ENCODE measurements at regions of chr2 and their contacts with region 1.

Region 1: GRCh38 chr2:49959961-49960553 is 805.7 kb upstream of the FSHR start:
- DNase-seq: no peak
- H3K4me3 ChIP-seq: no peak overlapping the region
- H3K27ac ChIP-seq: no peak overlapping the region
- H3K4me1 ChIP-seq: peaks cover 0 to 6% (median 4%) of the 10 kb centered on the region in 4 experiments; a peak in 2 of 7 replicates
- H3K27me3 ChIP-seq: no peaks in the 10 kb centered on the region
- CTCF ChIP-seq: no peak
- EP300 ChIP-seq: no peak
- POLR2A ChIP-seq: no peak
- RAD21 ChIP-seq: no peak

Region 2: GRCh38 chr2:49924044-49924817 is 35.8 kb before region 1 on chr2:
- CTCF ChIA-PET with region 1: no interaction called
- POLR2A ChIA-PET with region 1: no interaction called
- DNase-seq: no peak
- H3K4me3 ChIP-seq: peak overlapping the region in 1 of 4 experiments; percentile 13; a peak in 1 of 8 replicates
- H3K27ac ChIP-seq: no peak overlapping the region
- H3K4me1 ChIP-seq: peaks cover 0 to 15% (median 2%) of the 10 kb centered on the region in 4 experiments; a peak in 3 of 7 replicates
- H3K27me3 ChIP-seq: no peaks in the 10 kb centered on the region; a peak in 1 of 7 replicates
- CTCF ChIP-seq: no peak
- EP300 ChIP-seq: no peak
- POLR2A ChIP-seq: no peak
- RAD21 ChIP-seq: no peak

Region 3: GRCh38 chr2:49948091-49948490 is 12.0 kb before region 1 on chr2:
- CTCF ChIA-PET with region 1: interaction called, 12 read pairs
- POLR2A ChIA-PET with region 1: no interaction called
- DNase-seq: no peak
- H3K4me3 ChIP-seq: no peak overlapping the region
- H3K27ac ChIP-seq: no peak overlapping the region
- H3K4me1 ChIP-seq: no peaks in the 10 kb centered on the region
- H3K27me3 ChIP-seq: peaks cover 0 to 1% (median 0%) of the 10 kb centered on the region in 4 experiments; a peak in 1 of 7 replicates
- CTCF ChIP-seq: no peak
- EP300 ChIP-seq: no peak
- POLR2A ChIP-seq: no peak
- RAD21 ChIP-seq: no peak

Region 4: DNA sequence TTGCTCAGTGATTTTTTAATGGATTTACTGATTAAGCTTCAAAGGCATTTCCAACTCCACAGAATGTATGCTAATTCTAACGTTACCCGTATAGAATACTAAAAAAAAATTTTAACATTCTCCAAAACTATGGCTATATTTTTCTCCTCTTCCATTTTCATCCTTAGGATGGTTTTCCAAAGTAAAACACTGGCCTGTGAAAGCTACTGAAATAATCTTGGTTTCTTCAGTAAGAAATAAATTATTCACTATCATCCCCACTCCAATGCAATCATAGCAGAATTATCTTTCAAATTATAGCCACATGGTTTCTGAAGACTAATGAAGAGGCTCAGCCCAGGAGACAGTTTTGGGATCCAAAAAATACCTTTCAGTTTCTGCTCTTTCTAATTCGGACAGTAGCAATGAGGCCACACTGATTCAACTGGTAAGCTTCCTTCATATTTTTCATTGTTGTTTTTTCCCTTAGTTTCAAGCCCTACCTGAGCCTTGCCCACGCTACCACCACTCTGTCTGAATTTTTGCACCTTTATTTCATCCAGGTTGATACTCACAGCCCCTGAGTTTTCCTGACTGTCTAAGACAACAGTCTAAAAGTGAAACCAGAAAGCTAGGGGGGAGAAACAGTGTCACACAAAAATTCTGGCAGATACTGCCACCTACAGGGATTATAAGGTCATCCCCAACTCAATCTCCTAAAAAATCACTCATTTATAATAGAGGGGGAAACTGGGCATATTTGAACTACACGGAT is 183.9 kb after region 1 on chr2:
- CTCF ChIA-PET with region 1: interaction called, 39 read pairs
- POLR2A ChIA-PET with region 1: no interaction called
- DNase-seq: no peak
- H3K4me3 ChIP-seq: no peak overlapping the region
- H3K27ac ChIP-seq: no peak overlapping the region
- H3K4me1 ChIP-seq: peaks cover 0 to 3% (median 1%) of the 10 kb centered on the region in 4 experiments; a peak in 2 of 7 replicates
- H3K27me3 ChIP-seq: no peaks in the 10 kb centered on the region
- CTCF ChIP-seq: peak in 2 of 3 experiments; percentile 46 to 51; a peak in 2 of 4 replicates
- EP300 ChIP-seq: no peak
- POLR2A ChIP-seq: no peak
- RAD21 ChIP-seq: peak; percentile 79 to 86